ENCODE measurements at regions of chr7 and their contacts with region 1.

Region 1: DNA sequence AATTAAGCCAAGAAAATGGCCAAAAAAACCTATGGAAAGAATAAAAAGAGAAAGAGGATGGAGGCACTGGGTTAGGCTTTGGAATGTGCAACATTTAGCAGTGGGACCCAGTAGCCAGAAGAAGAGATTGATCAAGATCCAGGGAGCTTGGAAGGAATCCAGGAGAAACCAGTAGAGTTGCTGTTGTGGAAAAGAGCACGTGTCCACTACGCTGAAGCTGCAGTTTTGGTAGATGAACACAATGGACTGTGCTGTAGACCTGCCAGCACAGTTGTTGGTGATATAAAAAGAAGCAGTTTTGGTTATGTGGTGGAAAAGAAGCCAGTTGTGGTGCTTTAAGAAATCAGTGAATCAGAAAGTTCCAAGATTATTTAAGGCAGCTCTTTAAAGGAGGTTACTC is 802.2 kb upstream of the POM121L12 start:
- DNase-seq: no peak
- H3K4me3 ChIP-seq: no peak overlapping the region
- CTCF ChIP-seq: no peak
- POLR2A ChIP-seq: no peak

Region 2: GRCh38 chr7:50588937-50589336 is 1644.3 kb before region 1 on chr7:
- intact Hi-C with region 1: loop called (anchors 5 kb)
- DNase-seq: no peak
- H3K4me3 ChIP-seq: no peak overlapping the region
- CTCF ChIP-seq: no peak
- POLR2A ChIP-seq: no peak

Region 3: GRCh38 chr7:52197221-52197620 is 36.0 kb before region 1 on chr7:
- intact Hi-C with region 1: no loop called
- DNase-seq: no peak
- H3K4me3 ChIP-seq: no peak overlapping the region
- CTCF ChIP-seq: no peak
- POLR2A ChIP-seq: no peak

Region 4: DNA sequence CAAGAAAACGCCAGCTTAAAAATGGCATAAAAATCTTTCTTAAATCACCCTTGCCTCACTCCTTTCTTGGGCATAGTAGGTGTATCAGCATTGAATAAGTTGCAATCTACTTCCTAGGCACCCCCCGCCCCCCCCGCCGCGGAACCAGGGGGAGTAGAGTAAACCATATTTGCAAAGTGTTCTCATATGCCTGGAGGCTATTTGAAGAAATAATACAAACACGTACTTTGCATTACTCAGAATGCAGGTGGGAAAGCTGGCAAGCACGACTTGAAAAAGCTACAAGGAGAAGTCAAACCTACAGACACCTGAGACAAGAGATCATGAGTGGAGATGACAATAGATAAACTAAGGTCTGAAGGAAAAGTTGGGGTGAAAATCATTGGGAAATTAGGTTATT is 867.8 kb after region 1 on chr7:
- intact Hi-C with region 1: no loop called
- DNase-seq: no peak
- H3K4me3 ChIP-seq: no peak overlapping the region
- CTCF ChIP-seq: no peak
- POLR2A ChIP-seq: no peak

Region 5: GRCh38 chr7:53218730-53219504 is 985.7 kb after region 1 on chr7:
- intact Hi-C with region 1: no loop called
- DNase-seq: no peak
- H3K4me3 ChIP-seq: no peak overlapping the region
- CTCF ChIP-seq: no peak
- POLR2A ChIP-seq: no peak